Mammary epithelial cell (primary cell): ENCODE measurements at regions of chr10 and their contacts with region 1.

Region 1: GRCh38 chr10:47311932-47312662 is 10.2 kb upstream of the GDF2 start:
- DNase-seq: peak; percentile 54
- H3K4me3 ChIP-seq: no peak overlapping the region
- H3K27ac ChIP-seq: no peak overlapping the region
- H3K4me1 ChIP-seq: no peaks in the 10 kb centered on the region
- H3K27me3 ChIP-seq: peaks cover 3% of the 10 kb centered on the region
- CTCF ChIP-seq: peak; percentile 76 to 96

Region 2: GRCh38 chr10:47024399-47025252 is 287.5 kb before region 1 on chr10:
- CTCF ChIA-PET with region 1: interaction called, 3 read pairs
- dilution Hi-C with region 1: no loop called
- in situ Hi-C with region 1: no loop called
- intact Hi-C with region 1: loop called (anchors 1 kb)
- DNase-seq: peak; percentile 42
- H3K4me3 ChIP-seq: no peak overlapping the region
- H3K27ac ChIP-seq: no peak overlapping the region
- H3K4me1 ChIP-seq: no peaks in the 10 kb centered on the region
- H3K27me3 ChIP-seq: no peaks in the 10 kb centered on the region
- CTCF ChIP-seq: peak; percentile 93 to 97

Region 3: GRCh38 chr10:47058961-47059391 is 253.1 kb before region 1 on chr10:
- CTCF ChIA-PET with region 1: no interaction called
- dilution Hi-C with region 1: no loop called
- in situ Hi-C with region 1: loop called in 1 of 2 experiments (anchors 10 kb)
- intact Hi-C with region 1: no loop called
- DNase-seq: no peak
- H3K4me3 ChIP-seq: no peak overlapping the region
- H3K27ac ChIP-seq: no peak overlapping the region
- H3K4me1 ChIP-seq: no peaks in the 10 kb centered on the region
- H3K27me3 ChIP-seq: peaks cover 5% of the 10 kb centered on the region
- CTCF ChIP-seq: no peak